ENCODE measurements at regions of chr13 and their contacts with region 1.

Region 1: GRCh38 chr13:48562296-48563066 is 29.6 kb upstream of the RCBTB2 start:
- DNase-seq: peak; percentile 94
- H3K4me3 ChIP-seq: peak overlapping the region; percentile 52
- H3K27ac ChIP-seq: peak overlapping the region; percentile 83
- H3K4me1 ChIP-seq: peaks cover 50% of the 10 kb centered on the region
- CTCF ChIP-seq: no peak

Region 2: GRCh38 chr13:48037346-48038173 is 524.9 kb before region 1 on chr13 and contains the start of gene NUDT15:
- CTCF ChIA-PET with region 1: no interaction called
- POLR2A ChIA-PET with region 1: interaction called, 5 read pairs
- intact Hi-C with region 1: loop called (anchors 5 kb)
- DNase-seq: peak; percentile 98
- H3K4me3 ChIP-seq: peak within 1 kb of the TSS; percentile 78
- H3K27ac ChIP-seq: peak within 1 kb of the TSS; percentile 89
- H3K4me1 ChIP-seq: peaks cover 27% of the 10 kb centered on the region
- CTCF ChIP-seq: peak; percentile 97
- total RNA-seq, gene NUDT15: 19.3 and 26.8 TPM in 2 replicates

Region 3: GRCh38 chr13:48492470-48493065 is 69.9 kb before region 1 on chr13:
- CTCF ChIA-PET with region 1: no interaction called
- POLR2A ChIA-PET with region 1: no interaction called
- intact Hi-C with region 1: loop called (anchors 1 kb)
- DNase-seq: peak; percentile 89
- H3K4me3 ChIP-seq: peak overlapping the region; percentile 61
- H3K27ac ChIP-seq: peak overlapping the region; percentile 68
- H3K4me1 ChIP-seq: peaks cover 51% of the 10 kb centered on the region
- CTCF ChIP-seq: no peak

Region 4: DNA sequence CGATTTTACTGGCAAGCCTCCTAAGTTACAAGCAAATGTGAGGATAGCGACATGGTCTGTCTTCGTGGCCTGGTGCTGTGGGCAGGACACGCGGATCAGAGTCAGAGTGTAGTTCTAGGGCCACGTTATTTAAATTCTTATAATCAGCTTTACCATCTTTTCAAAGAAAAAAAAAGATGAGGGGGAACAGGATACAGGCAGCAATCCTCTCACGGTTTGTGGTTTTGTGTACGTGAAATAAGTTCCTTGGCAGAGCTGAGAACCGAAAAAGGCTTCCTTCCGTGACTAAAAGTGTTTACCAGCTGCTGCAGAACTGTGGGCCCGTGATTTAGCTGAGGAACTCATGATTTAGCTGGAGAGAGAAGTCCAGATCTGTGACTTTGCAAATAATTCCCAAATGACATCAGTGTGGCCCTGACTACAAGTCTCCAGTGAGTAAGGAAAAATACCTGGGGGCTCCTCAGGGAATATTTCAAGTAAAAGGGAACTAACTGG is 56.8 kb before region 1 on chr13:
- CTCF ChIA-PET with region 1: no interaction called
- POLR2A ChIA-PET with region 1: no interaction called
- intact Hi-C with region 1: loop called (anchors 2 kb)
- DNase-seq: peak; percentile 88
- H3K4me3 ChIP-seq: peak overlapping the region; percentile 46
- H3K27ac ChIP-seq: peak overlapping the region; percentile 20
- H3K4me1 ChIP-seq: peaks cover 53% of the 10 kb centered on the region
- CTCF ChIP-seq: no peak

Region 5: GRCh38 chr13:48532506-48533499 is 29.7 kb before region 1 on chr13 and contains the start of gene RCBTB2:
- CTCF ChIA-PET with region 1: interaction called, 3 read pairs
- POLR2A ChIA-PET with region 1: interaction called, 9 read pairs
- intact Hi-C with region 1: loop called (anchors 1 kb)
- DNase-seq: peak; percentile 99
- H3K4me3 ChIP-seq: peak within 1 kb of the TSS; percentile 73
- H3K27ac ChIP-seq: peak within 1 kb of the TSS; percentile 80
- H3K4me1 ChIP-seq: peaks cover 59% of the 10 kb centered on the region
- CTCF ChIP-seq: no peak
- total RNA-seq, gene RCBTB2: 4.4 and 9.0 TPM in 2 replicates

Region 6: DNA sequence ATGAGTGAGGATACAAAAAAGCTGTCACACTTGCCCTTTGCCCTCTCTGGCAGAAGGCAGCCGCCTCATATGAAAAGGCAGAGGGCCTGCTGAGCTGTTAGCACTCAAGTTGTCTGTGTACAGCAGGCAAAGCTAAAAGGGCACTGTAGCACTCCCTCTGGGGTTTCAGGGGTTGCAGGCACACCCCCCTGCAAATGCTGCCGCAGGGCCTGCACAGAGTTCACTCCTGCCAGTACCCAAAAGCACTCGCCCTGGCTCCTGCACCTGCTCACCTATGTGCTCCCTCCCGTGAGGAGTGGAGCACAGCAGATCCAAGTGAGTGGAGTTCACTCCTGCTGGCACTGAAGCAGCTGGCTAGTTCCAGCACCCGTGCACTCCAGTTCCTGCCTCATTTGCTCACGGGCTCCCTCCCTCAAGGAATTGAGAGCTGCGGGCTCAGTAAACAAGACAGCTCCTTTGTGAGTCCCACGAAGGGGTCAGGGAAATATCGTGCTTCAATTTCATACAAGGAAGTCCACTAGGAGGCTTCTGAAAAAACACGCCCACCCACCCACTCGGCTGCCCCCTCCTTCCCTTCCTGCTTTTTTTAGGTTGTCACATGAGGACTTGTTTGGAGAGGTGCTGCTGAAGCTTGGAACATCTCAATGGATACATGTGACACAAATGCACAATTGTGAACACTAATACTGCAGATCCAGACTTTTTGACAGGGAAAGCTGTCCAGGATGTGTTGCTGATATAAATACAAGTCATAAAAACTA is 19.7 kb before region 1 on chr13:
- CTCF ChIA-PET with region 1: interaction called, 3 read pairs
- POLR2A ChIA-PET with region 1: interaction called, 12 read pairs
- intact Hi-C with region 1: no loop called
- DNase-seq: peak; percentile 40
- H3K4me3 ChIP-seq: no peak overlapping the region
- H3K27ac ChIP-seq: no peak overlapping the region
- H3K4me1 ChIP-seq: peaks cover 19% of the 10 kb centered on the region
- CTCF ChIP-seq: peak; percentile 46

Region 7: DNA sequence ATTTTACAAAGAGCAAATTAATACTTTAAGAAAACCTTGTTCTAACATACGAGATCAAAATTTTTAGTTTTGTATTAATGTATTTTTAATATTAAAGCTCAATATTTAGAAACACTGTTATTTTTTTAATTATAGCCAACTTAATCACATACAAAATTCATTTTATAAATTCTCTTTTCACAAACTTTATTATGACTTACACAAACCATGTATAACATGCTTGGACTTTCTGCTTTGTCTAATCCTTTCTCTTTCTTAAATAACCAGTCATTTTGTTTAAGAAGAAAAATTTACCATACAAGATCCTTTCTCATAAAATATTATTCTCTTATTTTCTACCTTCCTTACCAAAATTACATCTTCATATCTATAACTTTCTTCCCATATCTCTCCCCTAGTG is 153.5 kb after region 1 on chr13:
- CTCF ChIA-PET with region 1: no interaction called
- POLR2A ChIA-PET with region 1: no interaction called
- intact Hi-C with region 1: no loop called
- DNase-seq: peak; percentile 13
- H3K4me3 ChIP-seq: no peak overlapping the region
- H3K27ac ChIP-seq: no peak overlapping the region
- H3K4me1 ChIP-seq: no peaks in the 10 kb centered on the region
- CTCF ChIP-seq: no peak

Region 8: DNA sequence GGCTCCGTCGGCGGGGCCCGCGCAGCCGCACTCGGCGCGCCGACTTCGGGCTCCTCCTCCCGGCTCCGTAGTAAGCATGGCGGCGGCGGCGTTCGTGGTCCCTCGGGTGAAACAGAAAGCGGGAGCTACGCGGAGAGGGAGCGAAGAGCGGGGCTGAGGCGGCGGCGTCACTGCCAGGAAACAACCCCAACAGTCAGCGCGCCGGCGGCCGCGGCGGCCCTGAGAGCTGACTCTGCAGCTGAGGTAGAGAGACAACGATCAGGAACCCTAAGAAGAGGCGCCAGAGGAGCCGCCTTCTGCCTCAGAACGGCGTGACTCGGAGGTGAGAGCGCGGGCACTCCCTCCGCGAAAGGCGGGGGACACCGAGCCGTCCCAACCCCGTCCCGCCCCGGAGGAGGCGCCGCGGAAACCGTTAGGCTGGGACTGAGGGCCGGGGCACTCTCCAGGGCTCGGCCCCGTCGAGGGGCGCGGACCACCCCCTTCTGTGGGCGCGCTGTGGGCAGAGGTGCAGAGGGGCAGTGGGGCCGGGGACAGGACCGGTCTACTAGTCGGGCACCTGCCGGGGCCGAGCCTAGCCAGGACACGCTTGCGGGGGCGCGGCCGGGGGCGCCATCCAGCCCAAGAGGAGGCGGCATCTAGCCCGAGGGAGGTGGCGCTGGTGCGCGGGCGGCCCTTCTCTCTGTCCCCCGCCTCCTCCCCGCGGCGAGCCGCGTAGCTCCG is 413.5 kb after region 1 on chr13 and contains the start of gene FNDC3A:
- CTCF ChIA-PET with region 1: no interaction called
- POLR2A ChIA-PET with region 1: interaction called, 3 read pairs
- intact Hi-C with region 1: loop called (anchors 2 kb)
- DNase-seq: peak; percentile 82
- H3K4me3 ChIP-seq: peak within 1 kb of the TSS; percentile 89
- H3K27ac ChIP-seq: peak within 1 kb of the TSS; percentile 91
- H3K4me1 ChIP-seq: peaks cover 35% of the 10 kb centered on the region
- CTCF ChIP-seq: peak; percentile 43; the same call in 1 of the 2 replicates
- total RNA-seq, gene FNDC3A: 33.0 and 38.7 TPM in 2 replicates

Region 9: GRCh38 chr13:49495783-49496762 is 933.6 kb after region 1 on chr13 and contains the start of gene PHF11:
- CTCF ChIA-PET with region 1: no interaction called
- POLR2A ChIA-PET with region 1: no interaction called
- intact Hi-C with region 1: no loop called
- DNase-seq: peak; percentile 94
- H3K4me3 ChIP-seq: peak within 1 kb of the TSS; percentile 76
- H3K27ac ChIP-seq: peak within 1 kb of the TSS; percentile 91
- H3K4me1 ChIP-seq: peaks cover 44% of the 10 kb centered on the region
- CTCF ChIP-seq: peak; percentile 36; the same call in 1 of the 2 replicates
- total RNA-seq, gene PHF11: 29.9 and 32.8 TPM in 2 replicates

Measured in OCI-LY7 (cell line).